ENCODE measurements at regions of chr11 and their contacts with region 1.

Region 1: GRCh38 chr11:47152953-47153950 is 23.4 kb downstream of the ARFGAP2 start:
- DNase-seq: peak; percentile 95
- H3K4me3 ChIP-seq: no peak overlapping the region
- H3K27ac ChIP-seq: peak overlapping the region in 1 of 4 donors; percentile 14
- H3K4me1 ChIP-seq: peaks cover 13 to 30% (median 27%) of the 10 kb centered on the region in 4 donors
- H3K27me3 ChIP-seq: no peaks in the 10 kb centered on the region
- CTCF ChIP-seq: peak; percentile 94 to 96 (median 95)
- EP300 ChIP-seq: no peak
- POLR2A ChIP-seq: no peak

Region 2: GRCh38 chr11:46889689-46890475 is 263.4 kb before region 1 on chr11:
- intact Hi-C with region 1: loop called (anchors 2 kb)
- DNase-seq: peak; percentile 95
- H3K4me3 ChIP-seq: no peak overlapping the region
- H3K27ac ChIP-seq: no peak overlapping the region
- H3K4me1 ChIP-seq: no peaks in the 10 kb centered on the region
- H3K27me3 ChIP-seq: no peaks in the 10 kb centered on the region
- CTCF ChIP-seq: peak; percentile 84 to 93 (median 88)
- EP300 ChIP-seq: no peak
- POLR2A ChIP-seq: no peak

Region 3: GRCh38 chr11:47004595-47005033 is 148.6 kb before region 1 on chr11:
- intact Hi-C with region 1: loop called (anchors 5 kb)
- DNase-seq: peak; percentile 93
- H3K4me3 ChIP-seq: no peak overlapping the region
- H3K27ac ChIP-seq: peak overlapping the region; percentile 55 to 81 (median 70)
- H3K4me1 ChIP-seq: peaks cover 27 to 54% (median 43%) of the 10 kb centered on the region in 4 donors
- H3K27me3 ChIP-seq: no peaks in the 10 kb centered on the region
- CTCF ChIP-seq: no peak
- EP300 ChIP-seq: no peak
- POLR2A ChIP-seq: no peak